ENCODE measurements at regions of chr16 and their contacts with region 1.

Region 1: DNA sequence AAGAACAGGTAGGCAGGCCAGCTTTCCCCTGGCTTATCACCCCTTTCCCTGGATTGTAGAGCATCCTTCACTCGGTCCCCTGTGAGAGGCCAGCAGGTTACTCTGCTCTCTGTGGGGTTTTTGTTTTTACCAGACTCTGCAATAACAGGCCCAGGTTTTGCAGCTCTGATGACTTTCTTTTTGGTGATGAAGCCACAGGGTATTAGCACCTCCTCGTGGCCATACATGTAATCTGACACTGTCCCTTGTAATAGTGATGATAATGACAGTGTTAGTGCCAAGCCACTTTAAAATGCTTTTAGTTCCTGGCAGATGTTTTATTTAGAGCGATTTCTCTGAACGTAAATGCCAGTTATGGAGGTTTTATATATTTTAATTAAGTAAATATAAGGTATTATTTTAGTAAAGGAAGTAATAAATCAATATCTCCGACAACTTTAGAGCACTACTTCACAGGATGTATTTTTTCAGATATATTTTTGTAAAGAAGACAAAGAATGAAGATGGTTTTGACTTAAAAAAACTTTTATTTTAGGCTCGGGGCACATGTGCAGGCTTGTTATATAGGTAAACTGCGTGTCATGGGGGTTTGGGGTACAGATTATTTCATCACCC is 38.0 kb upstream of the CPHXL start:
- DNase-seq: peak; percentile 42
- ATAC-seq: peak; percentile 92 to 95

Region 2: DNA sequence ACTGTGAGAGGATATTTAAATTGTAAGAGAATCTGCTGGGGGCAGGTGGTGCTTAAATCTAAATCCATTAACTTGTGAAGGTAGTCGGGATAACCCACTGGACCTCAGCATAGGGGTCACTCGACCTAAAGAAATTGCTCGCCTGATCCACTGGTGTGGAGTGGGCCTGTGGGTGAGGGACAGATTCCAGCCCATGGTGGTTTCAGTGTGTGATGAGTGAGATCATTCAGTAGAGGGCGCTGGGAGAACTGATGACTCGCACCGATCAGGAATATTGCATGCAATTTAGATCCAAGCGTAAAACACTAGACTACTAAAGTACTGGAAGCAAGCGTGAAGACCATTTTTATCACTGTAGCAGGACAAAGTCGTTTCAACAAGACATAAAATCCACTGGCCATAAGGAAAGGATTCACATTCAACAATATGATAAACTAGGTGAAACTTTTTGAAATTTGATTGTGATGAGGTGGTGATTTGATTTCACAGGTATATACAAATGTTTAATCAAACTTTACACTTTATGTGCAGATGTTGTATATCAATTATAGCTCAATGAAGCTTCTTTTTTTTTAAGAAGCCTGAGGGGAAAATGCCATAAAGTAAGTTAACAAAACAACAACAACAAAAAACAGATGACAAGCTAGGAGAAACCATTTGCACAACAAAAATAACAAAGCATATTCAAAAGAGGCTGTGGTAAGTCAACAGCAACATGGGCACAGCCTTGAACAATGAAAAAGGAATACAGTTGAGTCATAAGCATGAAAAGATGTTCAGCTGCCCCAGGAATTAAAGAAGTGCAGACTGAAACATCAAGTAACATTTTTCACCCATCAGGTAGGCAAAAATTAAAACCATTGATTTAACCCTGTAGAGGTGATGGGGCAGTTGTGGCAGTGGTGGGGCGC is 292.3 kb before region 1 on chr16:
- intact Hi-C with region 1: loop called (anchors 5 to 10 kb)
- DNase-seq: peak; percentile 58
- ATAC-seq: peak; percentile 93 to 96

Region 3: DNA sequence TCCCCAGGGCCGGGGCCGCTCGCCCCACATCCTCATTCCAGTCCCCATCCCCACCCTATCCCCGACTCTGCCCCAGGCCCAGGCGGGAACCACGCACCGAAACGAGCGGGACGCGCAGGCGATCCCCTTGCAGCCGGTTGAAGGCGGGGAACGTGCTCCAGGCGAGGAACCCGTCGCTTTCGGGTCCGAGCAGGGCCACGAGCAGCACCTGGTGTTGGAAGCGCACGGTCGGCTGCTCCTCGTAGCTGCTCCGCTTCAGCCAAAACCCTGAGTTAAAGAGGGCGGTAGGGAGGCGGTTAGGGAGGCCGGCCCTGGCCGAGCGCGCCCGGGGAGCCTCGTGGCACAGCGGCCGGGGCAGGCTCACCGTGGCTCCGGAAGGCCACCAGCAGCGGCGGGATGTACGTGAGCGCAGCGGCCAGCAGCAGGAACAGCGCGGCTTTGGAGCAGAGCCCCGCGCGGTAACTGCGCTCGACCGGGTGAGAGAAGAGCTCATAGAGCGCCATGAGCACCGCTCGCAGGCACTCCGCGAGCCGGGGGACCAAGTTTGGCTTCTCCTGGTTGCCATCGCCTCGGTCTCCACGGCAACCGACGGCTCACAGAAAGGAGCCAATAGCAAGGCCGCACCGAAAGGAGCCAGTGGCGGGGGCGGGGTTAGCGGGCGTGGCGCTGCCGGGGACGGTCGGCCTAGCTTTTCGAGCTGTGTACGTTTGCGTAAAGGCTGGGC is 208.4 kb before region 1 on chr16 and contains the start of gene TMEM231:
- intact Hi-C with region 1: no loop called
- DNase-seq: peak; percentile 99
- ATAC-seq: peak; percentile 97
- total RNA-seq, gene TMEM231: 5.6 to 7.3 TPM

Region 4: DNA sequence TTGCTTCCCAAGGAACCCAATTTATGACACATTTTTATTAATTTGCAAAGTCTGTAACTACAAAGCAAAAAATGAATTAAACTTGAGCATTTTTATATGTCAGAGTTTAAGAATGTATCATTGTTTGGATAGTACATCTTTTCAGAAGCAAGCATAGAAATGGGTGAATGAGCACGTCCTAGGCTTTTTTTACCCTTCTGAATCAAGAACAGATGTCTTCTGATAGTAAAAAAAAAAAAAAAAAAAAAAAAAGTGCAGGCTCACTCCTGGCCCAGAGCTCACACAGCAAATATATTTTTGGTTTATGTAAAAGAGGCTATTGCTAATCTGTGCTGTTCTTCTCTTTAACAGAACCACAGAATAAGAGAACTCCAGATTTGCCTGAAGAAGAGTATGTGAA is 110.3 kb before region 1 on chr16:
- intact Hi-C with region 1: loop called in 1 of 2 experiments (anchors 10 kb)
- DNase-seq: no peak
- ATAC-seq: no peak

Measured in left cardiac atrium (tissue), 4 donors.